Activated CD4-positive, alpha-beta memory T cell treated with anti-CD3 and anti-CD28 coated beads for 36 hours (primary cell): ENCODE measurements at regions of chr14 and their contacts with region 1.

Region 1: DNA sequence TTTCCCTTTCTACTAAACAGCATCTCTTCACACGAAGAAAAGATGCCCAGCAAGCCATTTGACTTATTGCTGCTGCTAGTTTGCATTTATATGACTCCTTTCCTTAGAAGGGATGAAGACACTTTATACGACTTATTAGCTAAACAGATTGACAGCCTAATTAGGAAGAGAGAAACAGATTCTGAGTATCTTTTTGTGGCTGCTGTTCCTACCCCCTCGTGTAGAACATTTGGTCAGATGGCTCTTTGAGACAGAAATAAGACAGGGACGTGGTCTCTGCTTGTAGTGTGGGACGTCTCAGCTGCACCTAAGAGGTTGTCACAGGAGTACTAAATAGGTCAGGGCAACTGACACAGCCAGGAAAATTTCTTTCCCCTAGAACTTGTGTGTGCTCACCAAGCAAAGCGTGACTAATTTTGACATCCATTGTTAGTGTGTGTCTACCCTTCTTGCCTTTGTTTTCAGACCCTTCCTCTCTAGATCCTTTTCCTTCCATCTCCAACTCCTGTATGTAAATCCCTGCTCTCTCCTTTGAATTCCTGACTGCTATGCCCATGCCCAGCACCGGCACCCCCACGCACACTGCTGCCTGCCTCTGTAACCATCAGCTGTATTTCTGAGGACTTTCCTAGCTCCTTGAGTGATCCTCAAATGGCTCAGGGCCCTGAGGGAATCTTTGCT is 83.2 kb downstream of the DAD1 start:
- DNase-seq: no peak
- H3K4me3 Mint-ChIP-seq: peak overlapping the region; percentile 79
- H3K27ac Mint-ChIP-seq: peak overlapping the region; percentile 98
- H3K4me1 Mint-ChIP-seq: peaks cover 35% of the 10 kb centered on the region
- H3K27me3 Mint-ChIP-seq: no peaks in the 10 kb centered on the region

Region 2: DNA sequence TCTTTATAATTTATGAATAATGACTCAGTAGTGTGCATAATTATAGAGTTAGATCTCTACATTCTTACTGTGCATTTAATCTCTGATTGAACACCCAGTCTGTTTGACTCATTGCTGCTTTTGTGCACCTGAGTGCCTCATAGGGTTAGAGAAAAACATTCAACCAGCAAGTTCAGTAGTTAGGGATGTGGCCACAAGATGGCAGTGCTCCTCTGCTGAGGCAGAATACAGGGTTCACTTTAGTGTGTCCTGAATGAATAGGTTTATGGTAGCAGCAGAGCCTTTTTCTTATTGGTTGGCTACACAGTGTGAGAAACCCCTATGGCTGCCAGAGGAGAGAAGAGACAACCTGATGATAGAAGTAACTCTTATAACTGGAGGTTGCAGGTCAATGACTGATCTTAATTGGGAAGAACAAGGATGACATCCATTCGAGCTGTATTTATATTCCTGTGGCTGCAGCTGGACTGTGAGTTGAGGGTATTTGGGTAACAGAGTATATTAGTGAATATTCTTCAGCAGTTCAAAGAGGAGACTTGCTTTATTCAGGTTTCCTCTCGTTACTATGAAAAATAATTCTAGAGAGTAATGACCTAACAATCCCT is 637.3 kb before region 1 on chr14:
- CTCF ChIA-PET with region 1: no interaction called
- POLR2A ChIA-PET with region 1: interaction called, 5 read pairs
- intact Hi-C with region 1: loop called (anchors 10 kb)
- DNase-seq: peak; percentile 89
- H3K4me3 Mint-ChIP-seq: peak overlapping the region; percentile 68
- H3K27ac Mint-ChIP-seq: peak overlapping the region; percentile 82
- H3K4me1 Mint-ChIP-seq: peaks cover 41% of the 10 kb centered on the region
- H3K27me3 Mint-ChIP-seq: no peaks in the 10 kb centered on the region

Region 3: DNA sequence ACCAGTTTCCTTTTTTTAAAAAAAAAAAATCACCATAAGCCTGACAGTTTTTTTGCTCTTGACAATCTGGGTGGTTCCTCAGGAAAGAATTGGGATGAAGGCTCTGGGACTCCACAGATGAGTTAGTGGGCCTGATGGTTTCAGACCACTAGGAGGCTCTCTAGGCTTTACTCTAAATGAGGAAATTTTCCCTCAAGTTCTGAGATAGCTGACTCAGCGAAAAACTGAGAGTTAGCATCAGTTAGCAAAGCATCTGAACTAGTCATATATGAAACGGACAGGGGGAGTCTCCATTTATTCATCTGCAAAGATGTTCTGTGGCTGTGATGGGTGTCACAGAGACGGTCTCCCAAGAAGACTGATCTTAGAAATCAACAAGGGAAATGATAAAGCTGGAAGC is 517.9 kb before region 1 on chr14:
- CTCF ChIA-PET with region 1: interaction called, 4 read pairs
- POLR2A ChIA-PET with region 1: interaction called, 3 read pairs
- intact Hi-C with region 1: loop called (anchors 1 kb)
- DNase-seq: peak; percentile 25
- H3K4me3 Mint-ChIP-seq: no peak overlapping the region
- H3K27ac Mint-ChIP-seq: peak overlapping the region; percentile 92
- H3K4me1 Mint-ChIP-seq: peaks cover 11% of the 10 kb centered on the region
- H3K27me3 Mint-ChIP-seq: no peaks in the 10 kb centered on the region

Region 4: GRCh38 chr14:22519877-22520685 is 14.2 kb after region 1 on chr14:
- CTCF ChIA-PET with region 1: interaction called, 10 read pairs
- POLR2A ChIA-PET with region 1: interaction called, 639 read pairs
- intact Hi-C with region 1: loop called (anchors 1 kb)
- DNase-seq: no peak
- H3K4me3 Mint-ChIP-seq: peak overlapping the region; percentile 83
- H3K27ac Mint-ChIP-seq: peak overlapping the region; percentile 99
- H3K4me1 Mint-ChIP-seq: peaks cover 88% of the 10 kb centered on the region
- H3K27me3 Mint-ChIP-seq: no peaks in the 10 kb centered on the region

Region 5: DNA sequence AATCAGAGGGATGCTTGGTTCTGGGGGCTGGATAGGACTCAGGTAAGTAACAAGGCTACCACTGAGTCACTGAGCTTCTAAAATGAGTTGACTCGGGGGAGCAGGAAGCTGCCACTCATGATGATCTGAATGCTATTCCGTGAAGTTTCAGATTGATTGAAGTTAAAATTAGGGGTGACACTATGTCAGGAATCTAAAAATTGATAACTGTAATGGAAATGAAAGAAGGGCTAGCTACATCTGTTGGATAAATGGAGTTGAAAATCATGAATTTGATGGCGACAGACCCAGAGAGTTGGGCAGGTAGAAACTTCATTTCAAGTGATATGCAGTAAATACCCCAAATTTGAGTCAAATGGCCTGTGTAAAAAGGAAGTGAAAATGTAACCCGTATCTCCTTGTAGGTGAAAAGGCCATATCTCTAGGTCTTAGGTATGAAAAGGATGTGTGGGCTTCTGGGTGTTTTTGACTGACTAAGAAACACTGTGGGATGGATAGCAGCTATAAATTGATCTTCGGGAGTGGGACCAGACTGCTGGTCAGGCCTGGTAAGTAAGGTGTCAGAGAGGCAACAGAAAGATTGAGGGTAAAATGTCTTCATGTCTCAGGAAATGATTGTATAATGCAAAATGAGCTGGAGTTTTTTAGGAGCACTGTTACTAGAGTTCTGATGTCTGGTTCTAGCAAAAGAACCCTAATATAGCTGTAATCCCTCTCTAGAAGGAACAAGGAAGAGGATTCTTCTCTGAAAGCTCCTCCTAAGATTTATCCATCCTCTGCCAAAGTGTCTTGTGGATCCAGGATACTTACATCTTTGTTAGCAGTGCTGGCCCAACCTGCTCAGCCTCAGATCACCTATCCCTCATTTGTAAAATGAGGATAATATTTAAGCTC is 25.9 kb after region 1 on chr14:
- CTCF ChIA-PET with region 1: interaction called, 5 read pairs
- POLR2A ChIA-PET with region 1: interaction called, 584 read pairs
- intact Hi-C with region 1: loop called (anchors 2 kb)
- DNase-seq: peak; percentile 66
- H3K4me3 Mint-ChIP-seq: peak overlapping the region; percentile 74
- H3K27ac Mint-ChIP-seq: peak overlapping the region; percentile 99
- H3K4me1 Mint-ChIP-seq: peaks cover 88% of the 10 kb centered on the region
- H3K27me3 Mint-ChIP-seq: no peaks in the 10 kb centered on the region

Region 6: DNA sequence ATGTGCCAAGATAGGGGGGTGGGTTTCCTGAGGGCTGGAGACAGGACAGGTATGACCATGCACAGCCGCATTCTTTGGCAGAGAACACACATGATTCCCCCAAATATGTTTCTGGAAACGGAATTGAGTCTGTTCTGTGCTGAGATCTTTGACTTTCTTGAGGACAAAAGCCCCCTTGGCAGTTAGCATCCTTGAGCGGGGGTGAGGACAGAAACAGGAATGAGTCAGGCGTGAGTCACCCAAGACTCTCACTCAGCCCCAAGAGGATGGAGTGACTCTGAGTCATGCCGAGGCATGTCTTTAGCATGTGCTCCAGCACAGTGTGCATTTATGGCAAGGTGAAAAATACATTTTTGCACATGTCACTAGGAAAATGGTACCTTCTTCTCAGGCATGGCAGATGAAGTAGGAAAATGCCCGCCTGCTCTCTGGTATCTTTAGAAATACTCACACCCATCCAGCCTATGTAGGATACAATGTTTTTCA is 31.1 kb after region 1 on chr14:
- CTCF ChIA-PET with region 1: interaction called, 3 read pairs
- POLR2A ChIA-PET with region 1: interaction called, 584 read pairs
- intact Hi-C with region 1: no loop called
- DNase-seq: peak; percentile 92
- H3K4me3 Mint-ChIP-seq: peak overlapping the region; percentile 81
- H3K27ac Mint-ChIP-seq: peak overlapping the region; percentile 99
- H3K4me1 Mint-ChIP-seq: peaks cover 95% of the 10 kb centered on the region
- H3K27me3 Mint-ChIP-seq: no peaks in the 10 kb centered on the region